ENCODE measurements at regions of chr6 and their contacts with region 1.

Region 1: DNA sequence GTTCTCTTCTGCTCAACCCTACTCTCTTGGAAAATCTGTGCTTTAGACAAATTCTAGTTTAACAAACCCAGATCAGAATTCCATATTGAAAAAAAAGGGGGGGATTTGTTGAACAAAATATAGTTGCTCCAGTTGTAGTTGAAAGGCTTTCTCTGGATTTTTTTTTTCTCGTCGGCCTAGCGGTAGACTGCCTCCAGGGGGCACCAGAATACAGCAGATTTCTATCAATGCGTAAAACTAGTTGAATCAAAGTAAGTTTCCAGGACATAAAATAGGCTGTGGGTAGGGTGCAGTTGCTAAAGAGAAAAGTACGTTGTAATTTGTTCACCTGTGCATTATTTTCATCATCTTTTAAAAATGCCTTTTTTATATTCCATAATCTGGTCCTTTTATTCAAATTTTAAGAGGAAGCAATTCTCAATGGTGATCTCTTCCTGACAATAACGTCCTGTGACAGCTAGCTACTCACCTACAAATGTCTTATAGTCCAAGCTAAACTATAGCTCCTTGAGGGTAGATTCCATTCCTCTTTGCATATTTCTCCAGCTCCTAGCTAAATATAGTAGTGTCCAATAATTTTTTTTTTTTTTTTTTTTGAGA is 105.4 kb downstream of the PERP start:
- DNase-seq: peak; percentile 84
- H3K4me3 Mint-ChIP-seq: no peak overlapping the region
- H3K27ac Mint-ChIP-seq: no peak overlapping the region
- H3K4me1 Mint-ChIP-seq: peaks cover 16% of the 10 kb centered on the region
- H3K27me3 Mint-ChIP-seq: peaks cover 3% of the 10 kb centered on the region

Region 2: GRCh38 chr6:137094411-137095008 is 907.3 kb before region 1 on chr6:
- CTCF ChIA-PET with region 1: no interaction called
- intact Hi-C with region 1: loop called (anchors 10 kb)
- DNase-seq: peak; percentile 75
- H3K4me3 Mint-ChIP-seq: no peak overlapping the region
- H3K27ac Mint-ChIP-seq: no peak overlapping the region
- H3K4me1 Mint-ChIP-seq: peaks cover 13% of the 10 kb centered on the region
- H3K27me3 Mint-ChIP-seq: peaks cover 3% of the 10 kb centered on the region

Region 3: GRCh38 chr6:137661601-137662000 is 340.2 kb before region 1 on chr6:
- CTCF ChIA-PET with region 1: interaction called, 5 read pairs
- intact Hi-C with region 1: loop called (anchors 1 kb)
- DNase-seq: peak; percentile 71
- H3K4me3 Mint-ChIP-seq: no peak overlapping the region
- H3K27ac Mint-ChIP-seq: no peak overlapping the region
- H3K4me1 Mint-ChIP-seq: peaks cover 19% of the 10 kb centered on the region
- H3K27me3 Mint-ChIP-seq: peaks cover 4% of the 10 kb centered on the region

Region 4: GRCh38 chr6:137928286-137928685 is 73.6 kb before region 1 on chr6:
- CTCF ChIA-PET with region 1: no interaction called
- intact Hi-C with region 1: no loop called
- DNase-seq: peak; percentile 36
- H3K4me3 Mint-ChIP-seq: peak overlapping the region; percentile 66
- H3K27ac Mint-ChIP-seq: peak overlapping the region; percentile 95
- H3K4me1 Mint-ChIP-seq: peaks cover 64% of the 10 kb centered on the region
- H3K27me3 Mint-ChIP-seq: no peaks in the 10 kb centered on the region

Region 5: DNA sequence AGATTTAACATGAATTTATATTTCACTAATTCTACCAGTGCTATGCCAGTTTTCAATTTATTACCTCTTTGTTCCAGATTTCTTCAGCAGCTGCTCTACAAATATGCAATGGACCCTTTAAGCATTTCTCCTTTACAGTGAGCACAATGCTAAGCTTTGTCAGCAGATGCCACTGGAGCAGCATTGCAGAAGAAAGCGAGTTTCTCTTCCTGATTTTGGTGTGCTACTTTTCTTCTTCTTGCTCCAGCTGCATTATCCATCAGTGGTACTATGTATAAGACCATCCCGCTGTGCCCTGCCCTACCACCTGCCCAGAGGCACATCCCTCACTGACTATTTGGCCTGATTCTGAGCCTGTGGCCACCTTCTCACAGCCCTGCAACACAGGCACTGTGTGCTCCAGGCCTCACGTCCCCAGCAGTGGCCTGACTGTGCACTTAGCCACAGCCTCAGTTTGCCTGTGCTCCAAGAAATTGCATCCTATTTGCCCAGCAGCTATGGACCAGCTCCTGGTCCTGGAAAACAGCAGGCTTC is 50.7 kb before region 1 on chr6:
- CTCF ChIA-PET with region 1: interaction called, 5 read pairs
- intact Hi-C with region 1: loop called (anchors 2 kb)
- DNase-seq: no peak
- H3K4me3 Mint-ChIP-seq: no peak overlapping the region
- H3K27ac Mint-ChIP-seq: no peak overlapping the region
- H3K4me1 Mint-ChIP-seq: peaks cover 31% of the 10 kb centered on the region
- H3K27me3 Mint-ChIP-seq: no peaks in the 10 kb centered on the region

Region 6: DNA sequence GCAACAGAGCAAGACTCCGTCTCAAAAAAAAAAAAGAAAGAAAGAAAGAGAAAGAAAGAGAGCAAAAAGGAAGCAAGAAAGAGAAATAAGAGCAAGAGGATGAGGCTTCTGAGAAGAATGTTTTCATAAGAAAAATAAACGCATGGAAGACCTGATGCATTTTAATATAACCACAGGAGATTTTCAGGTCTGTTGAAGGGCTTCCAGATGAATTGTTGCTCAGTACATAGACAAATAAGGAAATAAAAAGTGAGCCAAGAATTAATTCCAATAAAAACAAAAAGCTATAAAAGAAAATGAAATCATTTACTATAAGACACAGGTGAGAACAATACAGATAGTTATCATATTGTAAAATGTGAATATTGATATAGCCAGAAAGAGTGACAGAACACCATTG is 61.9 kb after region 1 on chr6:
- CTCF ChIA-PET with region 1: no interaction called
- intact Hi-C with region 1: no loop called
- DNase-seq: no peak
- H3K4me3 Mint-ChIP-seq: no peak overlapping the region
- H3K27ac Mint-ChIP-seq: no peak overlapping the region
- H3K4me1 Mint-ChIP-seq: no peaks in the 10 kb centered on the region
- H3K27me3 Mint-ChIP-seq: peaks cover 7% of the 10 kb centered on the region

Region 7: DNA sequence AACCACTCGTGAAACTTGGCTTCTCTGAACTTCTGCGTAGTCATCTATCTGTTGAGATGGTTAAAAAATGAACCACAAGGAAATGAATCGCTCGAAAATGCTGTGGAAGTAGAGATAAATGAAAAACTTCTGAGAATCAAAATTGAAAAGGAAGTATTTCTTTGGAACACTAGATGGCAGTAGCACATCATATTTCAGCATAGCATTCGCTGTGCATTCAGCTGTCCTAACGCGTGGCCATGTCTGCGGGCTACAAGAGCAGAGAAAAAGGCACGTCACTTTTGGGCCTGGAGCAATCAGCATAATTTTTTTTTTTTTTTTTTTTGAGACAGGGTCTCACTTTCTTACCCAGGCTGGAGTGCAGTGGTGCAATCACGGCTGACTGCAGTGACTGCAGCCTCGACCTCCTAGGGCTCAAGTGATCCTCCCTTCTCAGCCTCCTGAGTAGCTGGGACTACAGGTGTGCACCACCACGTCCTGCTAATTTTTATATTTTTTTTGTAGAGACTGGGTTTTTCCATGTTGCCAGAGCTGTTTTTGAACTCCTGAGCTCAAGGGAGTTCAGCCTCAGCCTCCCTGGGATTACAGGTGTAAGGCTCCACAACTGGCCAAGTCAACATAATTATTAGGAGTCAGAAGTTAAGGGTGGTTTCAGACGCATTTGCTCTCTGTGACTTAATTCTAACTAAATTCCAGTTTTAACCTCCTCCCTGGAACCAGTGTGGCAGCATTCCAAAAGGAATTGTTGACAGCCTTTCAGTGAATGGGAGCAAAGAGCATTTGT is 114.2 kb after region 1 on chr6:
- CTCF ChIA-PET with region 1: interaction called, 17 read pairs
- intact Hi-C with region 1: no loop called
- DNase-seq: peak; percentile 60
- H3K4me3 Mint-ChIP-seq: no peak overlapping the region
- H3K27ac Mint-ChIP-seq: no peak overlapping the region
- H3K4me1 Mint-ChIP-seq: peaks cover 6% of the 10 kb centered on the region
- H3K27me3 Mint-ChIP-seq: peaks cover 12% of the 10 kb centered on the region

Region 8: DNA sequence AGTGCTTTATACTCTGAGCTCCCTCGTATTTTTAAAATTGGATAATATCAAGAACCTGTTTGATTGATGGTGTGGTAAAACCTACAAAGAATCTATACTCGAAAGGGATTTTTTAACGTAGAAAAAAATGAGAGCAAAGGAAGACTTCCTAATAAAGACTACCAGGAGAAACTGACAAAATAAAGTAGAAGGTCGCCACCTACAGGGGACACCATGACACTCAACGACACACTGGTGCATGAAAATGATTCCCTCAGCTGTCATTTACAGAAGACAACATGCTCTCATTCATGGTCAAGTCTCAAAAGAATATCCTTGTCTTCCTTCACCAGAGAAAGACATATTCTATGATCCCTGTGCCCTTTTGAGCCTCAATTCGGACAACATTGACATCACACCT is 507.5 kb after region 1 on chr6:
- CTCF ChIA-PET with region 1: interaction called, 3 read pairs
- intact Hi-C with region 1: loop called (anchors 5 kb)
- DNase-seq: peak; percentile 78
- H3K4me3 Mint-ChIP-seq: no peak overlapping the region
- H3K27ac Mint-ChIP-seq: no peak overlapping the region
- H3K4me1 Mint-ChIP-seq: no peaks in the 10 kb centered on the region
- H3K27me3 Mint-ChIP-seq: no peaks in the 10 kb centered on the region

Measured in activated naive CD4-positive, alpha-beta T cell treated with anti-CD3 and anti-CD28 coated beads for 36 hours (primary cell).